ENCODE measurements at regions of chr10 and their contacts with region 1.

Region 1: DNA sequence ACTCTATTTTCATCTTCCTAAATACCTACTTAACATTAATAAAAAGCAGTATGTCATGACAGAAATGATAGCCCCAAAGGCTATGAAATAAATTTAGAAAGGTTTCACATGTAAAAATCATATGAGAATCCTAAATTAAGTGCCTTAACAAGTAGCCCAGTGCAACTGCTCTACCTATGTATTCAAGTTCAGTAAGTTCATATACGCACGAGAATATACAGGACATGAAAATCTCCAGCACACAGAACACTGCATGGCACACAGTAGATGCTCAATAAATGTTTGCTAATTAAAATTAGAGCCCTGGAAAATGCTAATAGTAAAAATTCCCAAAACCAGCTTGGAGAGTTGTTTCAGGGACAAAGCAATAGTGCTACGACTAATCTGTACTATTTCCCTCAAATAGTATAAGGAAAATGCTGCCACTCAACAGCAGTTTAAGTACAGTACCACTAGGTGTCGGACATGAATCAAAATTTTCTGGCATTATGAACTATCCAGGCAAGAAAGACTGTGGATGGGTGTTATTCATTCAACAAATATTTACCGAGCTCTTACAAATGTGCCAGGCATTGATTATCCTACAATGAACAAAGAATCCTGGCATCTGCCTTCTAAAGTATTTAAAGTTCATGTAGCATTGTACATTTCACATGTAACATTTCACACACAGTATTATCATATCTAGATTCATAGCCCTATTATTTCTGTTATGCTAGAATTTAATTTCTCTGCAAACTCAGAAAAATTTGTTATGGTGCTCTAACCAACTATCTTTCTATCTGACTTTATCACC is 80.9 kb downstream of the ARHGAP21 start:
- DNase-seq: no peak
- H3K4me3 ChIP-seq: no peak overlapping the region
- H3K27ac ChIP-seq: no peak overlapping the region
- H3K4me1 ChIP-seq: peaks cover 0 to 17% (median 10%) of the 10 kb centered on the region in 4 donors
- H3K27me3 ChIP-seq: no peaks in the 10 kb centered on the region
- CTCF ChIP-seq: peak; percentile 30 to 73 (median 65)
- EP300 ChIP-seq: no peak
- POLR2A ChIP-seq: no peak

Region 2: GRCh38 chr10:24360282-24361127 is 282.3 kb before region 1 on chr10:
- intact Hi-C with region 1: no loop called
- DNase-seq: no peak
- H3K4me3 ChIP-seq: no peak overlapping the region
- H3K27ac ChIP-seq: no peak overlapping the region
- H3K4me1 ChIP-seq: no peaks in the 10 kb centered on the region
- H3K27me3 ChIP-seq: no peaks in the 10 kb centered on the region
- CTCF ChIP-seq: peak; percentile 12 to 57 (median 46)
- EP300 ChIP-seq: no peak
- POLR2A ChIP-seq: no peak

Region 3: DNA sequence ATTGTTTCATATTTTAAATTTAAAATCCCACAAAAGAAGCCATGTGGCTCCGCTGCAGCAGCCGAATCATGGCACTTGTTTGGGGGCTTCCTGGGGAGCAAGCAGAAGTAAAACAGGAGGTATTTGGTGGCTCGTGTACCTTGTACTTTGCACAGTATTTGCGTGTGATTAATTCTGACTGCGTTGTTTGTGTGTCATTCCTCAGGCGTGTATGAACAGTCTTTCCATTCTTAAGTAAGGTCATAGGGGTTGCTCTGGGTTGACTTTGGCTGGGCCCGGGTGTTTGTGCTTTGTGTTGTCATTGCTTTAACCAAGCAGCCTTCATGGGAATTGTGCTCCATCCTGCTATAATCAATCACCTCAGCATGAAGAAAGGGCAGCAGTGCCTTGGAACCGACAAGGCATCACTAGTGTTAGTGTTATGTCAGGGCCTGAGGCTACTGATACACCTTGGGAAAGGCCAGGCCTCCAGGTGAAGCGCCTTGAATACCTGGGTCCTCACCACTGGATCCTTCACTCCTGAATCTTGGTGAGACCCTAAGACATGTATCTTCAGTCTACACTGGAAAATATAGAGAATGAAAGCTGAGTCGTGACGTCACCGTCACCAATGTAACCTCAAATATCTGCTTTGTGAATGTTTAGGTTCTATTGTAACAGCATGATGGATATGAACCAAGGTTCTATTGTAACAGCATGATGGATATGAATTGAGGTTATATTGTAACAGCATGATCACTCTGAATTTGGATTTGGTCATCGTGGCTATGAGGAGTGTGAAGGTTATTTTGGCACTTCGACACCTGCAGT is 101.4 kb before region 1 on chr10:
- intact Hi-C with region 1: no loop called
- DNase-seq: no peak
- H3K4me3 ChIP-seq: no peak overlapping the region
- H3K27ac ChIP-seq: no peak overlapping the region
- H3K4me1 ChIP-seq: no peaks in the 10 kb centered on the region
- H3K27me3 ChIP-seq: no peaks in the 10 kb centered on the region
- CTCF ChIP-seq: no peak
- EP300 ChIP-seq: no peak
- POLR2A ChIP-seq: no peak

Region 4: GRCh38 chr10:24694106-24694505 is 51.3 kb after region 1 on chr10:
- intact Hi-C with region 1: no loop called
- DNase-seq: no peak
- H3K4me3 ChIP-seq: no peak overlapping the region
- H3K27ac ChIP-seq: no peak overlapping the region
- H3K4me1 ChIP-seq: peaks cover 0 to 39% (median 14%) of the 10 kb centered on the region in 4 donors
- H3K27me3 ChIP-seq: no peaks in the 10 kb centered on the region
- CTCF ChIP-seq: no peak
- EP300 ChIP-seq: no peak
- POLR2A ChIP-seq: no peak

Region 5: DNA sequence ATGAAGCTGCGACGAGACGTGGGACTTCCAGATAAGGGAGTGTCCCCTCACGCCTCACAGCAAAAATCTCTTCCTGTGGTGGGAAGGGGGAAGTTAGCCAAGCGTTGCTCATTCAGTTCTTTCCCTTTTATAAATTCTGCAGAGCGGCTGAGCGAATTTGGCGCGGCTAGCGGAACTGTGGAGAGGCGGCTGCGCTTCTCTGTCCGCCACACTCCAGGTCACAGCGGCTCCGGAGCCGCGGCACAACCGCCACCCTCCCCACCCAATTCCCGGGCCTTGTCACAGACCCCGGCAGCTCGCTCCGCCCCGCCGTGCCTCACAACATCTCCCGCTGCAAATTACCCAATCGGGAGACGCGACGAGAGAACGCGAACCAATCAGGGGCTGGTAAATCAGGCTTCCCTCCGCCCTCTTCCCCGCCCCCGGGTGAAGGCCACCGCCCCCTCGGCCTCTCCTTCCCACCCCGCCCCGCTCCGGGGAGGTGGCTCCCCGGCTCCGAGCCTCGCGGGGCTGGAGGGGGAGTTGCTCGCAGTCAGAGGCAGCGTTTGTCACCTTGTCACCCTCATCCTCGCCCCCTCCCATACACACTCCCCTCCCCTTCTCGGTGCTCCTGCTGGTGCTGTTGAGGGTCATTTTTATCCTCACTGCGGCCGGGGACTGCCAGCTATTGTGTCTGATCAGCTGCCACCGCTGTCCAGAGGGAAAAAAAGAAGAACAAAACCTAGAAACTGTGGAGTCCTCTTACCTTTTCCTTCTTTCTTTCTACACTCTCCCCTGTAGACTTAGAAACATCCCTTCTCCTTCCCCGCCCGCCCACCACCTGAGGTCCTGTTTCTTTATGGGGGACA is 81.8 kb after region 1 on chr10:
- intact Hi-C with region 1: loop called (anchors 5 kb)
- DNase-seq: peak; percentile 99
- H3K4me3 ChIP-seq: peak overlapping the region; percentile 54 to 92 (median 90)
- H3K27ac ChIP-seq: peak overlapping the region; percentile 91 to 99 (median 98)
- H3K4me1 ChIP-seq: peaks cover 0 to 32% (median 17%) of the 10 kb centered on the region in 4 donors
- H3K27me3 ChIP-seq: no peaks in the 10 kb centered on the region
- CTCF ChIP-seq: peak in 1 of 4 experiments; percentile 18
- EP300 ChIP-seq: no peak
- POLR2A ChIP-seq: peak; percentile 85 to 95

Region 6: GRCh38 chr10:24800861-24801260 is 158.0 kb after region 1 on chr10:
- intact Hi-C with region 1: no loop called
- DNase-seq: no peak
- H3K4me3 ChIP-seq: no peak overlapping the region
- H3K27ac ChIP-seq: no peak overlapping the region
- H3K4me1 ChIP-seq: no peaks in the 10 kb centered on the region
- H3K27me3 ChIP-seq: no peaks in the 10 kb centered on the region
- CTCF ChIP-seq: no peak
- EP300 ChIP-seq: no peak
- POLR2A ChIP-seq: no peak

Region 7: DNA sequence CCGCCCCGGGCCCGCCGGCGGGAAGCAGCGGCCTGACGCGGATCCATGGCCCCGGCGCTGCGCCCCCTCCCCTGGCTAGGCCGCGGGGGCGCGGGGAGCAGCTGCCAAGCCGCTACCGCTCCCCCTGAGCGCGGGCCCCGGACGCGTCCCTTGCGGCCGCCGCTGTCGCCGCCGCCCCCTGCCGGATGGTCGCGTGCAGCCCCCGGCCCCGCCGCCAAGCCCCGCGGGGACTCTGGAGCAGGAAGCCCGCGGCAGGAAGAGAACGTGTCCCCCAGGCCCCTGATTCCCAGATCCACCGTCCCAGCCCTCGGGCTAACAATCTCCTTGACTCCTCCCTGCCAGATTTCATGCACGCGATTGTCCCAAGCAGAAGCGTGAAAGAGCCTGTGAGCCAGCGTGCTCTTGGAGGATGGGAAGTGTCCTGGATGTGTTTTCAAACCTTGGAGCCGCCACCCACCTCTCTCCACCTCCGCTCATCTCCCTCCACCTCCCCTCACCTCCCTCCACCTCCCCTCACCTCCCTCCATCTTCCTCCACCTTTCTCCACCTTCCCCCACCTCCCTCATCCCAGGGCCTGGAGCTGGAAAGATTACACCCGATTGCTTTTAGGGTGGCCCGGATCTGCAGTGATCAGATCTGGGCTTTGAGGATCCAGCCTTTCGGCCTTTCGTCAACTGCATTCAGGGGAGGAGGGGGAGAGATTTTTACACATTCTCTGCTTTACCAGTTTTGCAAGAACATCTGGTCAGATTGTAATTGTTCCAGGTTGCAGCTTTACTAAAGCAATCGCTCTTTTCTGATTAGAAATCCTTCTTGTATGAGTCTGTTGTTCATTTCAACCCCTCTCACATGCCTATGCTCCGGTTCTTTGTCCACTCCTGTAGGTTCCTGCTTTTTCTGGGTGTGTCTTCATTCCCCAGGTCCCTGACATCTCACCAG is 310.2 kb after region 1 on chr10:
- intact Hi-C with region 1: loop called (anchors 10 kb)
- DNase-seq: peak; percentile 78
- H3K4me3 ChIP-seq: peak overlapping the region; percentile 50 to 78 (median 73)
- H3K27ac ChIP-seq: peak overlapping the region; percentile 74 to 87 (median 82)
- H3K4me1 ChIP-seq: peaks cover 0 to 31% (median 25%) of the 10 kb centered on the region in 4 donors
- H3K27me3 ChIP-seq: no peaks in the 10 kb centered on the region
- CTCF ChIP-seq: peak in 1 of 4 experiments; percentile 42
- EP300 ChIP-seq: no peak
- POLR2A ChIP-seq: no peak

Region 8: DNA sequence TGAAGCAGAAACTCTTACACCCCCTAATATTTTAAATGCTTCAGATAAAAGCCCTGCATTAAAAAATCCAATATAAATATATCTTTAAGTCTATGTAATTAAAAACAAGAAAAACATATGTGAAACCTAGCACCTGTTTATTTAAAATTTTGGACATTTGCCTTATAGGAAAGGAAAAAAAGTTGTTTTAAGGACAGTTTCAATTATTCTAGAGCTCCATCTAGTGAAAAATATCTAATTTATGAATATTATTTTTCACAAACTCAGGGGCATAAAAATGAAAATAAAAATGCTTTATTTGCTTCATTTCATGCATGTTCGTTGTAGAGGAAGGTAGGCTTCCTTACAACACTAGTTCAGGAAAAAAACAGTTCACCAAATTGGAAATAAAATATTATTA is 347.0 kb after region 1 on chr10:
- intact Hi-C with region 1: loop called (anchors 2 kb)
- DNase-seq: no peak
- H3K4me3 ChIP-seq: no peak overlapping the region
- H3K27ac ChIP-seq: no peak overlapping the region
- H3K4me1 ChIP-seq: no peaks in the 10 kb centered on the region
- H3K27me3 ChIP-seq: no peaks in the 10 kb centered on the region
- CTCF ChIP-seq: peak in 1 of 4 experiments; percentile 25
- EP300 ChIP-seq: no peak
- POLR2A ChIP-seq: no peak

Region 9: GRCh38 chr10:25080880-25081581 is 438.2 kb after region 1 on chr10:
- intact Hi-C with region 1: loop called (anchors 1 kb)
- DNase-seq: peak; percentile 88
- H3K4me3 ChIP-seq: no peak overlapping the region
- H3K27ac ChIP-seq: peak overlapping the region in 3 of 4 donors; percentile 47 to 55 (median 48)
- H3K4me1 ChIP-seq: peaks cover 0 to 19% (median 11%) of the 10 kb centered on the region in 4 donors
- H3K27me3 ChIP-seq: no peaks in the 10 kb centered on the region
- CTCF ChIP-seq: peak; percentile 75 to 87 (median 83)
- EP300 ChIP-seq: no peak
- POLR2A ChIP-seq: no peak